ENCODE measurements at regions of chr6 and their contacts with region 1.

Region 1: DNA sequence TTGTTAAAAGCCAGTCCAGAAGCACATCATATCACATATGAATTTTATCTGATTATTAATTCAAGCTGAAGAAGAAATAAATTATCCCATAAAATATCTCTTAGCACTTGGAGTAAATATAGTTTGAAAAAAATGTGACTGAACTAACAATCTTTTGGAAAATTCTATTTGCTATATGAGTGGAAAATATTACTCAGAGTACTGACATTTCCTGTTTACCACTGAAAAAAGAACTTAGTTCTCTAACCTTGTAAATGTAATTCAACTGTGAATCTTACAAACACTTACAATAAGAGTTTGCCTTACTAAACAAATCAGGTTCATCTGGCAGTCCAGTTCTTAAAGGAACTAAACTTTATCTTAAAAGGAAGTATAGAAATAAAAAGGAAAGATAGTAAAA is 44.2 kb downstream of the MOXD1 start:
- DNase-seq: peak; percentile 70
- ATAC-seq: peak; percentile 88
- H3K4me3 ChIP-seq: no peak overlapping the region
- H3K27ac ChIP-seq: peak overlapping the region; percentile 41
- H3K4me1 ChIP-seq: peaks cover 21% of the 10 kb centered on the region; the same call in 1 of the 2 replicates
- H3K27me3 ChIP-seq: no peaks in the 10 kb centered on the region
- CTCF ChIP-seq: no peak

Region 2: DNA sequence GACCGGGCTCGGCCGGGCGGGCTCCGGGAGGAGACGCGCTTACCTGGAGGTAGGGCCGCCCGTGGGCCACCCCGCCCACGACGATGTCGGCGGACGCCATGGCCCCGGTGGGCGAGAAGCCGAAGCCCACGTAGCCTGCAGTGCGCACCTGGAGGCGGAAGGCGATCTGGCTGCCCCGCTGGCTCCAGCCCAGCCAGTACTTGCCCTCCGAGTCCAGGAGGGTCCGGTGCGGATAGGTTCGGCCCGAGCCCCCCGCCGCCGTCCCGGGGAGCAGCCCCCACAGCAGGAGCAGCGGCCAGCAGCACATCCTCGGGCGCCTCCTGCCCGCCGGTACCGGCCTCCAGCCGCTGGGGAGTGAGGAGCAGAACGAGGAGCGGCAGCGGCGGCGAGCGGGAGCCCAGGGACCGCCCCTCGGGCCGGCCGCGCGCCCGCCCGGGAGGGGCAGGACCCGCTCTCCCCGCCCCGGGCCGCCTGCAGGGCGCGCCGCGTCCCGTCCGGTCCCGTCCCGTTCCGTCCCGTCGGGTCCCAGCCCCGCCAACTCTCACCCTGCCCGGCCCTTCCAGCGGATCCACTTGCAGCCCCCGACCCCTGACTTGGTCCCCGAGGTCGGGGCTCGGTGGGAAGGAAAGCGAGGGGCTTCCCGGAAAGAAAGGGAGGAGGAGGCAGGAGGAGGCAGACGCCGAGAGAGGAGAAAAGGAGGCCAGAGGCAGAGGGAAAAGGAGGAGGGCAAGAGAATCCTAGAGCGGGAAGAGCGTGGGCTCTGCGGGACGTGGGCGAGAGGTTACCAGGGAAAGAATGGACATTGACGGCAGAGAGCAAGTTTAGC is 44.2 kb after region 1 on chr6 and contains the start of gene MOXD1:
- CTCF ChIA-PET with region 1: no interaction called
- POLR2A ChIA-PET with region 1: no interaction called
- intact Hi-C with region 1: loop called (anchors 2 kb)
- DNase-seq: peak; percentile 61
- ATAC-seq: peak; percentile 52
- H3K4me3 ChIP-seq: peak within 1 kb of the TSS; percentile 84
- H3K27ac ChIP-seq: peak within 1 kb of the TSS; percentile 30; the same call in 1 of the 2 replicates
- H3K4me1 ChIP-seq: peaks cover 43% of the 10 kb centered on the region
- H3K27me3 ChIP-seq: no peaks in the 10 kb centered on the region
- CTCF ChIP-seq: no peak
- total RNA-seq, gene MOXD1: 5.0 and 9.9 TPM in 2 replicates